ENCODE measurements at regions of chr1 and their contacts with region 1.

Region 1: GRCh38 chr1:155636397-155637153 is 26.6 kb downstream of the MSTO1 start:
- DNase-seq: no peak
- H3K4me3 Mint-ChIP-seq: peak overlapping the region; percentile 93
- H3K27ac Mint-ChIP-seq: peak overlapping the region; percentile 94
- H3K4me1 Mint-ChIP-seq: peaks cover 20% of the 10 kb centered on the region
- H3K27me3 Mint-ChIP-seq: no peaks in the 10 kb centered on the region

Region 2: GRCh38 chr1:155669233-155670162 is 32.9 kb after region 1 on chr1:
- intact Hi-C with region 1: no loop called
- DNase-seq: no peak
- H3K4me3 Mint-ChIP-seq: no peak overlapping the region
- H3K27ac Mint-ChIP-seq: no peak overlapping the region
- H3K4me1 Mint-ChIP-seq: no peaks in the 10 kb centered on the region
- H3K27me3 Mint-ChIP-seq: no peaks in the 10 kb centered on the region

Region 3: DNA sequence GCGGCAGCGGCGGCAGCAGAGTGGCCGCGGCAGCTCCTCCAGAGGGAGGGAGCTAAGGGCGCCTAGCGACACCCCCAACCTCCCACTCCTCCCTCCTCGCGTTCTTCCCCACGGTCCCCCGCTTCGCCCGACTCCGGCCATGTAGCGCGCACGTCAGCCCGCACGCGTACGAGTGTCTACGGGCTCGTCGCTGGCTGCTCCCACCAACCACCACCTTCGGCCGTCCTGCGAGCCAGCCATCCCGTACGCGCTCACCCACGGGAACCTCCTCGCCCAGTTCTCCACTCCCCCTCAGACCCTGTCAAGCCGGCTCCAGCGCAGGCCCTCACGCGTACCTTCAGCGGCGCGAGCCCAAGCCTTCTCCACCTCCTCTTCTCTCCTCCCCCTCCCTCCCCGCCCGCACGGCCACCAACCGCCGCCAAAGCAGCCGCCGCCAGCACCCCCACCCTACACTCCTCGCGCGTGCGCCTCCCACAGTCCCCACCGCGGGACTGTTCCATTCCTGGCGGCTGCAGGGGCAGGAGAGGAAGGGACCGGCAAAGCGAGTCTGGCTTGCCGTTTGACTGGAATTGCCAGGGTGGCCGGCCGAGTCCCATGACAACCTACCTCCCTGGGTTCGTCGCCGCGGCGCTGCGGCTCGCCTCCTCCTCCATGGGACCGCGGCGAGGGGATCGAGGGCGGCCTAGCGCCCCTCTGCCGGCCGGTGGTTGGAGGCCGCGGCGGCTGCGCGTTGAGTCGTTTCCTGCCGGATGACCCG is 51.9 kb after region 1 on chr1 and contains the start of gene YY1AP1:
- intact Hi-C with region 1: loop called (anchors 5 kb)
- DNase-seq: peak; percentile 88
- H3K4me3 Mint-ChIP-seq: peak within 1 kb of the TSS; percentile 95
- H3K27ac Mint-ChIP-seq: peak within 1 kb of the TSS; percentile 96
- H3K4me1 Mint-ChIP-seq: peaks cover 62% of the 10 kb centered on the region
- H3K27me3 Mint-ChIP-seq: peaks cover 3% of the 10 kb centered on the region
- total RNA-seq, gene YY1AP1: 62.2 and 64.4 TPM in 2 replicates

Region 4: GRCh38 chr1:155717041-155717440 is 80.5 kb after region 1 on chr1:
- intact Hi-C with region 1: no loop called
- DNase-seq: no peak
- H3K4me3 Mint-ChIP-seq: no peak overlapping the region
- H3K27ac Mint-ChIP-seq: no peak overlapping the region
- H3K4me1 Mint-ChIP-seq: peaks cover 17% of the 10 kb centered on the region
- H3K27me3 Mint-ChIP-seq: no peaks in the 10 kb centered on the region